ENCODE measurements at regions of chr3 and their contacts with region 1.

Region 1: GRCh38 chr3:69181592-69182211 is 59.3 kb upstream of the LMOD3 start:
- DNase-seq: no peak
- H3K4me3 Mint-ChIP-seq: no peak overlapping the region
- H3K27ac Mint-ChIP-seq: peak overlapping the region; percentile 32
- H3K4me1 Mint-ChIP-seq: peaks cover 42% of the 10 kb centered on the region
- H3K27me3 Mint-ChIP-seq: no peaks in the 10 kb centered on the region

Region 2: GRCh38 chr3:67654099-67654843 is 1527.4 kb before region 1 on chr3 and contains the start of gene SUCLG2:
- intact Hi-C with region 1: no loop called
- DNase-seq: peak; percentile 78
- H3K4me3 Mint-ChIP-seq: peak within 1 kb of the TSS; percentile 82
- H3K27ac Mint-ChIP-seq: peak within 1 kb of the TSS; percentile 85
- H3K4me1 Mint-ChIP-seq: peaks cover 59% of the 10 kb centered on the region
- H3K27me3 Mint-ChIP-seq: no peaks in the 10 kb centered on the region
- total RNA-seq, gene SUCLG2: 30.3 and 31.0 TPM in 2 replicates

Region 3: DNA sequence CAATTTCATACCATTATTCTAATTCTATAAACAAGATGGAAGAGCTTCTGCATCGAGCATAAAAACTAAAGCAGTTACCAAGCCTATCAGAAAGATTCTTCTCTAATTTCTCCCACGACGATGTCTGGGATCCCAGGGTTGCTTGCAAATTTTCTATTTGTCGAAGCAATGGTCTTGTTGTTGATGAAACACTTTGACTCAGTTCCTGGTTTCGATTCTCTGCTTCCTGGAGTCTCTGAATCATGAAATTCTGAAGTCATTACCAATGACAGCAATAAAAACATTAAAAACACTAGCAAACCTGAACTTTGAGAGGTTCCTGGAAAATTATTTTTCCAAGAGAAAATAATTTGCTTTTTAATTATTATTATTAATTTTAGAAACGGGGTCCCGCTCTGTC is 148.2 kb before region 1 on chr3:
- intact Hi-C with region 1: loop called (anchors 5 kb)
- DNase-seq: no peak
- H3K4me3 Mint-ChIP-seq: no peak overlapping the region
- H3K27ac Mint-ChIP-seq: peak overlapping the region; percentile 34
- H3K4me1 Mint-ChIP-seq: peaks cover 18% of the 10 kb centered on the region
- H3K27me3 Mint-ChIP-seq: no peaks in the 10 kb centered on the region

Region 4: DNA sequence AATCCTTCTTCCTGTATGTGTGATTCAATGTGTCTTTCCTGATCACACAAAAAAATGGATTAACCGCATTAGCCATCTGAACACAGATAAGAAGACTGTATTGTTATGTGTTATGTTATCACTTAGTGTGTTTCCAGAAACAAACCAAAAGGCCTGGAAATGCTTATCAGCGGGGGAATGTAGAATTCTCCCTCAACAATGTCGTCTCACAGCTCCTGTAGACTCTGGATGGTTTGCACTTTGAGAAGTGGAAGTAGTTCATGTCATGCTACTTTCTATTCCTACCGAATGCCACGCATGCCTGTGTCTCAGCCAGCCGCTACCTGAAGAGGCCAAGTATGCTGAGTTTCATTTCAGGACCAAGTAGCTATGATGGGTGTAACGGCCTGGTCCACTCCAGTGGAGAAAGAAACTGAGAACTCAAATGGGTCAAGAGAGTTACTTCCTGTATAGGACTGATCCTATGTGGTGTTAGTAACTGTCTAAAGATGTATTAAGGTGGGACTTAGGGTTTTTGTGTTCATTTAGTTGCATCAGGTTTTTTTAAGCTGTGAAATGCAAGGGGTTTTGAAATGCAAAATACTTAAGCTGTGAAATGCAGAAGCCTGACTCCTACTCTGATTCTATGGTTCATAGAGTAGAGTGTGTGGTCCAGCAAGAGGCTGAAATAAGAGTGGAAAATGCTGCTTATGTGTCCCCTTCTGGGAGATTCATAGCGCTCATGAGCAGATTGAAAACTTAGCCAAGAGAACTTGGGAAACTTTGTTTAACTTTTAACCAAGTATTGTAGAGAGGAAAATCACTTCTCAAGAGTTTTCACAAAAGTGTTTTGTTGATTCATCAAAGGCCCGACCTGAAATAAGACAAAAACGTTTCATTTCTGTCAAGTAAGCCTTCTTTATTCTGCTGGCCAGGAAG is 59.2 kb after region 1 on chr3:
- intact Hi-C with region 1: no loop called
- DNase-seq: no peak
- H3K4me3 Mint-ChIP-seq: no peak overlapping the region
- H3K27ac Mint-ChIP-seq: no peak overlapping the region
- H3K4me1 Mint-ChIP-seq: peaks cover 27% of the 10 kb centered on the region
- H3K27me3 Mint-ChIP-seq: no peaks in the 10 kb centered on the region